ENCODE measurements at regions of chr21 and their contacts with region 1.

Region 1: GRCh38 chr21:16797540-16797939 is 715.3 kb upstream of the CXADR start:
- DNase-seq: no peak
- H3K4me3 ChIP-seq: no peak overlapping the region
- H3K27ac ChIP-seq: no peak overlapping the region
- H3K4me1 ChIP-seq: peaks cover 19% of the 10 kb centered on the region
- H3K27me3 ChIP-seq: no peaks in the 10 kb centered on the region
- CTCF ChIP-seq: no peak
- POLR2A ChIP-seq: no peak

Region 2: DNA sequence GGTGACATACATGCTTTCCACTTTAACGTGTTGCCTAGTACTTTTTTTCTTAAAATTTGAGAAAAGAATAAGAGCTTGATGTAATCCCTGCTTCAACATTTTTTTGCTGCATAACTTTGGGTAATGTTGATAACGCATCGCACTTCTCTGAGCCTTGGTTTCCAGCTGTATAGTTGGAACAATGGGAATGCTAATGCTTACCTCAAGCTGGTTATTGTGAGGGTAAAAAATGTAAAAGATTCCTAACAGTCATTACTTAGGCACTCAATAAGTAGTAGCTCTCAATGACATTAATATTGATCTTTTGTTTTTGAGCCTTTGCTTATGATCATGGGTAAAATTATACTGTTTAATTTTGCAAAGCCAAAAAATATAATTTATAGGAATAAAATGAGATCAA is 32.0 kb after region 1 on chr21:
- CTCF ChIA-PET with region 1: no interaction called
- POLR2A ChIA-PET with region 1: no interaction called
- dilution Hi-C with region 1: no loop called
- intact Hi-C with region 1: loop called (anchors 1 kb)
- DNase-seq: no peak
- H3K4me3 ChIP-seq: no peak overlapping the region
- H3K27ac ChIP-seq: no peak overlapping the region
- H3K4me1 ChIP-seq: no peaks in the 10 kb centered on the region
- H3K27me3 ChIP-seq: no peaks in the 10 kb centered on the region
- CTCF ChIP-seq: no peak
- POLR2A ChIP-seq: no peak